Activated CD8-positive, alpha-beta T cell treated with anti-CD3 and anti-CD28 coated beads for 36 hours (primary cell): ENCODE measurements at regions of chr14 and their contacts with region 1.

Region 1: GRCh38 chr14:91177073-91178034 is 63.5 kb downstream of the DGLUCY start:
- DNase-seq: peak; percentile 84
- ATAC-seq: peak; percentile 95
- H3K4me3 Mint-ChIP-seq: no peak overlapping the region
- H3K27ac Mint-ChIP-seq: peak overlapping the region; percentile 89
- H3K4me1 Mint-ChIP-seq: peaks cover 16% of the 10 kb centered on the region
- H3K27me3 Mint-ChIP-seq: no peaks in the 10 kb centered on the region
- CTCF ChIP-seq: peak; percentile 90

Region 2: GRCh38 chr14:90894241-90894640 is 283.1 kb before region 1 on chr14:
- CTCF ChIA-PET with region 1: interaction called, 175 read pairs
- POLR2A ChIA-PET with region 1: interaction called, 3 read pairs
- intact Hi-C with region 1: no loop called
- DNase-seq: no peak
- ATAC-seq: no peak
- H3K4me3 Mint-ChIP-seq: no peak overlapping the region
- H3K27ac Mint-ChIP-seq: no peak overlapping the region
- H3K4me1 Mint-ChIP-seq: peaks cover 4% of the 10 kb centered on the region
- H3K27me3 Mint-ChIP-seq: no peaks in the 10 kb centered on the region
- CTCF ChIP-seq: no peak

Region 3: DNA sequence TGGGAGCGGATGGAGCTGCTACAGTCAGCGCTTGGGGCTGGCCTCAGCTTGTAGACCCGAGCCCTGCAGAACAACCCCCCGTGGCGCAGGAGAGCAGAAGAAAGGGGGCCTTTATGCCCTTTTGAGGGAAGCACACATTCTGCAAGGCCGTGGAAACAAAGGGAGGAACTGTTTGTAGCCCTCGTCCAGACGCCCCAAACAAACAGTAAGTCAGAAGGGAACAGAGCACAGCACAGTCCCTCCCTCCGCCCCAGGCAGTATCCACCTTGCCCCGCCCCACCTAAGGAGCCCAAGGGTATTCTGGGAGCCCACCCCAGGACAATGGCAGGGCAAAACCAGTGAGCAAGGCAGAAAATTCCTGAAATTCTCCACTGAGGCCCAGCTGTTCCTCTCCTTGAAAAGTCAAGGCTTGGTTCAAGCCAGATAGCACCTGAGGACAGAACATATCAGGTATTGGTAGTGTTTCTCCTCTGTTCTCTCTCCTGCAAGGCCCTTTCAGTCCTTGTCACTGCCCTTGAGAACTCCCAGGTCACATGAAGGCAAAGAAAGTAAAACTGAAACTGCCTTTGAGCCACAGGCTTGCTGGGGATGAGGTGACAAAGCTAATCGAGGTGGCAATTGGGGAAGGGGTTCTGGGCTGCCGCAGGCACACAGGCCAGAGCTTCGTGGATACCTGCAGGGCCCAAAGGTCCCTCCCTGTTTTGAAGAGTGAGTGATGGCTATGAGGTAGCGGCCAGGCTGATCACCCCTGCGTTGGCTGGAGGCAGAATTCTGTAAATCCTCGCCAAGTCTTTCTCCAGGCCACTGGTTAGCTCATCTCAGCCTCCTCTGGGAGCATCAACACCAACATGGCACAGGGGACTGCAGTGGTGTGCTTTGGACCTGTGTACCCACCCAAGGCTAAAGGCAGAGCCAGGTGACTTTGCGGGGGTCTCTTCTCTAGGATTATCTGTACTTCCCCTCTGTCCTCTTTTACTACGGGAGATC is 63.0 kb before region 1 on chr14:
- CTCF ChIA-PET with region 1: interaction called, 16 read pairs
- POLR2A ChIA-PET with region 1: no interaction called
- intact Hi-C with region 1: no loop called
- DNase-seq: peak; percentile 84
- ATAC-seq: peak; percentile 84
- H3K4me3 Mint-ChIP-seq: peak overlapping the region; percentile 92
- H3K27ac Mint-ChIP-seq: peak overlapping the region; percentile 92
- H3K4me1 Mint-ChIP-seq: peaks cover 57% of the 10 kb centered on the region
- H3K27me3 Mint-ChIP-seq: no peaks in the 10 kb centered on the region
- CTCF ChIP-seq: no peak

Region 4: GRCh38 chr14:91193069-91193468 is 15.7 kb after region 1 on chr14:
- CTCF ChIA-PET with region 1: interaction called, 22 read pairs
- POLR2A ChIA-PET with region 1: interaction called, 4 read pairs
- intact Hi-C with region 1: no loop called
- DNase-seq: no peak
- ATAC-seq: no peak
- H3K4me3 Mint-ChIP-seq: no peak overlapping the region
- H3K27ac Mint-ChIP-seq: no peak overlapping the region
- H3K4me1 Mint-ChIP-seq: peaks cover 24% of the 10 kb centered on the region
- H3K27me3 Mint-ChIP-seq: no peaks in the 10 kb centered on the region
- CTCF ChIP-seq: no peak

Region 5: GRCh38 chr14:91249841-91250616 is 72.7 kb after region 1 on chr14:
- CTCF ChIA-PET with region 1: interaction called, 102 read pairs
- POLR2A ChIA-PET with region 1: interaction called, 23 read pairs
- intact Hi-C with region 1: no loop called
- DNase-seq: peak; percentile 70
- ATAC-seq: peak; percentile 11
- H3K4me3 Mint-ChIP-seq: peak overlapping the region; percentile 54
- H3K27ac Mint-ChIP-seq: peak overlapping the region; percentile 93
- H3K4me1 Mint-ChIP-seq: peaks cover 84% of the 10 kb centered on the region
- H3K27me3 Mint-ChIP-seq: peaks cover under 1% of the 10 kb centered on the region
- CTCF ChIP-seq: no peak

Region 6: GRCh38 chr14:91281346-91281745 is 104.0 kb after region 1 on chr14:
- CTCF ChIA-PET with region 1: interaction called, 215 read pairs
- POLR2A ChIA-PET with region 1: interaction called, 5 read pairs
- intact Hi-C with region 1: loop called (anchors 1 kb)
- DNase-seq: no peak
- ATAC-seq: no peak
- H3K4me3 Mint-ChIP-seq: no peak overlapping the region
- H3K27ac Mint-ChIP-seq: peak overlapping the region; percentile 43
- H3K4me1 Mint-ChIP-seq: peaks cover 13% of the 10 kb centered on the region
- H3K27me3 Mint-ChIP-seq: no peaks in the 10 kb centered on the region
- CTCF ChIP-seq: no peak

Region 7: DNA sequence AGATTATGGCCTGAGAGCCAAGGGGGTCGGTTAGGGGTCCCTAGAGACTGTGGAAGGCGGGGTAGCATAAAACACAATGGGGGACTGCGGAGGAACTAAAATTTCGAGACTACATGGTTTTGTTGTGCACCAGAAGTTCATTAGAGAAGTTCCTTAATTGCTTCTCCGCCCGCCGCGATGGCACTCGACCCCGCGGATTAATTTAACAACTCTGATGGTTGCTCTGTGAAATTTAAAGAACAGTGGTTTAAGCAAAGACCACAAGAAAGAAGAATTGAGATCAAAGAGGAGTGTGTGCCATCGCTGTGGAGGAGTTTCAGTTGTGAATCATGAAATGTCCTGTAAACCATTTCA is 241.7 kb after region 1 on chr14:
- CTCF ChIA-PET with region 1: no interaction called
- POLR2A ChIA-PET with region 1: no interaction called
- intact Hi-C with region 1: no loop called
- DNase-seq: peak; percentile 80
- ATAC-seq: peak; percentile 11
- H3K4me3 Mint-ChIP-seq: peak overlapping the region; percentile 72
- H3K27ac Mint-ChIP-seq: peak overlapping the region; percentile 90
- H3K4me1 Mint-ChIP-seq: peaks cover 24% of the 10 kb centered on the region
- H3K27me3 Mint-ChIP-seq: no peaks in the 10 kb centered on the region
- CTCF ChIP-seq: peak; percentile 65